Thyroid gland (tissue), 4 donors: ENCODE measurements at regions of chr5 and their contacts with region 1.

Region 1: DNA sequence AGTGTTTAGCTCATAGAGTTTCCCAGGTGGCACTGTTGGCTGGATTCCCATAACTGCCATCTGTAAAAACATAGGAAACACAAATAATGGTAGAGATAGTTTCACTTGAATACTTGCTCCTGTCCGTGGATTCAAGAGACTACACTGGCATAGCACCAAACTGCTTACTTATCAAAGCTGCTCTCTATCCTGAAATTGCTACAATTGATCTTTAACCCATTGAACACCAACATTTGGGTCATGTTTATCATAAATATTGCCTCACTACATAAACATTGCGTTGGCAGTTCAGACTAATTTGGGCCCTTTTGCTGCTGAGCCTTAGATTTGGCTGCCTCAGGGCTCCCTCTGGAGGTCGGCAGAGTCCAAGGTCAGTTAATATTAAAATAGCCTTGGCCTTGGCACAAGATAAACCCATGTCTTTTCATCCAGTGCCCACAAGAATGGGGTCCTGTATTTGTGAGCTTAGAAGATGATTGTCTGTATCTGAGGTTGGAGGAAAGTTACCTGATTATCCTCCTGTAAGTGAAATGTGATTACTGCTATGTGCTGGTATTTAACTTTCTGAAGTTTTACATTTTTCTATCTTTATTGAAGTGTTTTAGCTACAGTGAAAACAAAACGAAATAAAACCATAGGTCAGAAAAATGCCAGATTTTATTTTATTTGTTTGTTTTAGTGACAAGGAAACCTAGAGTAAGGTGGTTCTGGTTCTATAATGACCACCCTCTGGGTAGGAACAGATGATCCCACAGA is 4.0 kb upstream of the RANBP3L start:
- DNase-seq: peak; percentile 61 to 70
- H3K4me3 ChIP-seq: no peak overlapping the region
- H3K27ac ChIP-seq: peak overlapping the region in 2 of 3 donors; percentile 14 to 63
- H3K4me1 ChIP-seq: peaks cover 15 to 22% of the 10 kb centered on the region in 2 donors
- H3K27me3 ChIP-seq: no peaks in the 10 kb centered on the region
- CTCF ChIP-seq: peak in 5 of 6 experiments; percentile 62 to 94 (median 86)
- POLR2A ChIP-seq: no peak

Region 2: DNA sequence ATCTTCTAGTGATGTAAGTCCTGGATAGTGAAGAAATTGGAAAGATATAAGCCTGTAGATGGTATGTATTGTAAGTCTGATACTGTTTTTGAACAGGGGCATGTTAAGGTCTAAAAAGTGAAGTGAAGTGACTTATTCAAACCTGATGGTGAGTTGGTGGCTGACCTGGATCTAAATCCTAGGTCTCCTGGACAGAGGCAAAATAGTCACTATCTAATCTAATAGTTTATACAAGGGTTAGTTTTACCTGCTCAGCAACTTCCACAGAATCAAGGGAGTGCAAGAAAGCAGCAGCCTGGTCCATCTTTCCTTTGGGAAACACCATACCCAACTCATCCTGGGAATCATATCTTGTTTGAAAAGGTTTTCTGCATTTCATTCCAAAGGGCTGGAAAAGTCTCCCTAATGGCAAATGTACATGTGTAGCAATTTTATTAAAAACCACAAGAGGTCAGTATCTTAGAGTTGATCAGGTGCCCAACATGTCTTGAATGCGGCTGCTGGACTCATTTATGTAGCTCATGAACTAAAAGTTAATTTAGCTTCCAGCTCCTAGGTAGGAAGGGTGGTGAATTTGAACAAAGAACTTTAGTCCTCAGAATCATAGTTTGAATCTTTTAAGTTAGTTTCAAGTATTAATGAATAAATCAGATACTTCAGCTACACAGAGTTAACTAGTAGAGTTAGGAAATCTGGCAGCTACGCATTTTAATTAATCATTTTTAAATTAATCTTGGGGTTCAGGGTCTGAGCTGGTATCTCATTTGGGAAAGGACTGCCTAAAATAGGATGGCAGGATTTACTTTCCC is 127.8 kb before region 1 on chr5:
- intact Hi-C with region 1: loop called (anchors 5 kb)
- DNase-seq: peak; percentile 15 to 16
- H3K4me3 ChIP-seq: no peak overlapping the region
- H3K27ac ChIP-seq: no peak overlapping the region
- H3K4me1 ChIP-seq: no peaks in the 10 kb centered on the region
- H3K27me3 ChIP-seq: no peaks in the 10 kb centered on the region
- CTCF ChIP-seq: peak in 5 of 6 experiments; percentile 25 to 73 (median 64)
- POLR2A ChIP-seq: no peak

Region 3: DNA sequence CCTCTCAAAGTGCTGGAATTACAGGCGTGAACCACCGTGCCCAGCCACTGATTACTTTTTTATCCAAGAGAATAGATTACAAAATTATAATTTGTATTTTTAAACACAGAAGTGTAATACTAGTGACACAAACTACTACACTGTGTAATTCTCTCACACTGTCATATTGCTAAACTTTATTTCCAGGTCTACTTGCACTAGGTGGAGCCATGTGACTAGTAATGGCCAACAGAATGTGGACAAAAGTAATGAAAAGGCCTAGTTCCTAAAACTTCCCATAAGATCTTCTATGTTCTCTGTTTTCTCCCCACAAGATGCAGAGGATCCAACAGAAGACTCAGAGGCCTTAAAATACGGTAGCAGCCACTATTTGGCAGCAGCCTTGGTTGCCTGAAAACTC is 91.3 kb before region 1 on chr5:
- intact Hi-C with region 1: no loop called
- DNase-seq: no peak
- H3K4me3 ChIP-seq: no peak overlapping the region
- H3K27ac ChIP-seq: no peak overlapping the region
- H3K4me1 ChIP-seq: no peaks in the 10 kb centered on the region
- H3K27me3 ChIP-seq: no peaks in the 10 kb centered on the region
- CTCF ChIP-seq: peak in 1 of 6 experiments; percentile 20
- POLR2A ChIP-seq: no peak

Region 4: DNA sequence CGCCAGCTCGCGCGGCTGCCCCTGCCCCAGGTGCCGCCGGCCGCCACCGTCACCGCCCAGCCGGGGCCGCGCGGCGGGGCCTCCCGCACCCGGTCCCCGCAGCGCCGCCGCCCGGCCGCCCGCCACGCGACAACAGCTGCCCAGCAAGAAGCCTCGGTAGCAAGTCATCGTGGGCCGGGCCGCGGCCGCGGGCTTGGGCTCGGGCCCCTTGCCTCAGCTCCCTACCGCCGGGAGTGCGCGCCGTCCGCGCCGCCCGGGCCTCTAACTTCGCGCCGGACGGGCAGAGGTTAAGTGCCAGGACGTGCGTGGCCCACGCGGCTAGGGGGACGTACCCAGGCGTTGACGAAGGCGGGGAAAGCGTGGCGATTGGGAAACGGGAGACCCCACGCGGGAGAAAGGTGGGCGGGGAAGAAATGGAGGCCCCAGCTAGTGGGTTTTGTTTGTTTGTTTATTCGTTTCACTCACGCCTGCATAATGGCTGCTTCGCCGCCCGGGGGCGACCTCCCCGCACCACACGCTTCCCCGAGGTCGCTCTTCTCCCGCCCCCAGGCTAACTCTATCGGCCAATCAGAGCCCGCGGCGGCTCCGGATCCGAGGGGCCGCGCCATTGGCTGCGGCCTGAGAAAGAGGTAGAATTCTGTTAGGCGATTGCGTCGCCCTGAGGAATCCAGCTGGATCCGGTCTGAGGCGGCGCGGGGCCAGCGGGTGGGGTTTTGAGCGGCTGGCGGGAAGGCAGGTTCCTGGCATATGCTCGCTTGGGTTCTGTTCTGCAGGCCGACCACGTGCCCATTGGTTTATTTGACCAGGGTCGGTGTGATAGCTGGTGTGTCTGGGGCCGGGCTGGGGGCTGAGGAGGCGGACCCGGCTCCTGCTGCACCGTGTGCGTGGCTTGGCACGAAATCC is 63.9 kb before region 1 on chr5 and contains the start of gene NADK2:
- intact Hi-C with region 1: loop called (anchors 10 kb)
- DNase-seq: peak; percentile 96 to 97
- H3K4me3 ChIP-seq: peak within 1 kb of the TSS; percentile 80 to 92 (median 87)
- H3K27ac ChIP-seq: peak within 1 kb of the TSS; percentile 95 to 99 (median 98)
- H3K4me1 ChIP-seq: peaks cover 29 to 39% of the 10 kb centered on the region in 2 donors
- H3K27me3 ChIP-seq: no peaks in the 10 kb centered on the region
- CTCF ChIP-seq: peak; percentile 32 to 95 (median 68)
- POLR2A ChIP-seq: peak; percentile 76 to 98
- total RNA-seq, gene NADK2: 28.8 to 47.2 (median 44.4) TPM

Region 5: DNA sequence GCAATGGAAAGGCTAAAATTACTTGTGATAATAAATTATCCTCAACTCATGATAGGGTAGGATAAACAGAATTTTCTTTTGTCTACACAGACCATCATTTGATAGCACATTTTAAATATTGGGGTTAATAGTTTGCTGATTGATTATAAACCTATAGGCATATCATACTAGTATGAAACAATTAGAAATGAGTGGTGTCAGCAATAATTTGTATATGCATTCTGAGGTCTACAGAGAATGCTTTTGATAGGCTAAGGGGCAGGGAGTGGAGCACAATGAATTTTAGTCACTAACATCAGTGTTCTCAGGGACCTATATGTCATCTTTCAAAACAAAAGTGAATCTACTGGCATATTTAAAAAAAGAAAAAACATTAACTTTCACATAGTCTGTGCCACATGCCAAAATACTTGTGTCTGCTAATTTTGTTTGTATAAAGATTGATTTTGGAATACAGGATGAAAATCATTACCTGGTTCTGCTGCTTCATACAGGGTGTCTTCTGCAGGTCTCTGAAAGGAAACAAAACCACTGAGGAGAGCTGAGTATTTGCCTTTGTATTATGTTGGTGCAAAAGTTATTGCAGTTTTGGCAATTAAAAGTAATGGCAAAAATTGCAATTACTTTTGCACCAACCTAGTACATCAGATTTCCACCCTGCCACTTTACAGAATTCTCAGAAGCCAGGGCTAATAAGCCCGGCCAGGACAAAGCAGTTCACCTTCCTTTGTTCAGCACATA is 36.1 kb before region 1 on chr5:
- intact Hi-C with region 1: loop called (anchors 5 kb)
- DNase-seq: no peak
- H3K4me3 ChIP-seq: no peak overlapping the region
- H3K27ac ChIP-seq: peak overlapping the region; percentile 21 to 93 (median 77)
- H3K4me1 ChIP-seq: peaks cover 33 to 37% of the 10 kb centered on the region in 2 donors
- H3K27me3 ChIP-seq: no peaks in the 10 kb centered on the region
- CTCF ChIP-seq: no peak
- POLR2A ChIP-seq: no peak

Region 6: GRCh38 chr5:36535378-36535777 is 229.6 kb after region 1 on chr5:
- intact Hi-C with region 1: no loop called
- DNase-seq: no peak
- H3K4me3 ChIP-seq: no peak overlapping the region
- H3K27ac ChIP-seq: no peak overlapping the region
- H3K4me1 ChIP-seq: no peaks in the 10 kb centered on the region
- H3K27me3 ChIP-seq: no peaks in the 10 kb centered on the region
- CTCF ChIP-seq: no peak
- POLR2A ChIP-seq: no peak